ENCODE measurements at regions of chr11 and their contacts with region 1.

Region 1: DNA sequence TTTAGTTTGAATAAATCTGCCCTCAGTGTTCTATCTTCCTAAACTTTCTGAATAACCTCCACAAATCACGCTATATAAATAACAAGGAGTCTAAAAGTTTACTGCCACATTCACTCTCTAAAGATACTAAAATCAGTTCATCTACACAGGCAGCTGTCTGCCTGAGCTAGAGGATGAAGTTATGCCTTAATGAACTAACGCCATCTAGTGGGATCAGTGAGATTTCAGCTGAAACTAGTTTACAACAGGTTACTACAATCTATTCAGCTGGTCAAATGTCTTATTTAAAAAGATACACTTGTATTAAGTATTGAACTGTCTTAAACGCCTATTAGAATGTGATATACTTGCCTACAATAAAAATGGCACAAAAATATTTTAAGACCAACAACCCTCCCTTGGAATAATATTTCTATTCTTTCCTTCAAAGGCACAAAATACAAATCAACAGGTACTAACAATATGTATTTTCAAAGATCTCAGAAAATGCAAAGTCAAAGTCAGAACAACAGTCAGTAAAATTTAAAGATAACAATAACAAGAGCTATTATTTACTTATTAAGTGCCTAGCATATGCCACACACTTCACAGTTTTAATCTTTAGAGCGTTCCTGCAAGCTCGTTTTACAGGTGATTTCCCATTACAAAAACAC is 84.1 kb downstream of the LARGE2 start:
- DNase-seq: peak in 1 of 2 donors; percentile 78
- ATAC-seq: peak; percentile 79 to 87 (median 83)
- H3K4me3 ChIP-seq: no peak overlapping the region
- H3K4me3 Mint-ChIP-seq: no peak overlapping the region
- H3K27ac ChIP-seq: no peak overlapping the region
- H3K27ac Mint-ChIP-seq: peak overlapping the region; percentile 6 to 67
- H3K4me1 ChIP-seq: no peaks in the 10 kb centered on the region
- H3K4me1 Mint-ChIP-seq: peaks cover 18 to 21% of the 10 kb centered on the region in 2 donors
- H3K27me3 ChIP-seq: no peaks in the 10 kb centered on the region
- H3K27me3 Mint-ChIP-seq: no peaks in the 10 kb centered on the region
- CTCF ChIP-seq: peak; percentile 71

Region 2: GRCh38 chr11:45872513-45873356 is 133.8 kb before region 1 on chr11:
- intact Hi-C with region 1: loop called (anchors 10 kb)
- DNase-seq: peak in 1 of 2 donors; percentile 57
- ATAC-seq: peak; percentile 66 to 78 (median 71)
- H3K4me3 ChIP-seq: no peak overlapping the region
- H3K4me3 Mint-ChIP-seq: peak overlapping the region; percentile 9
- H3K27ac ChIP-seq: no peak overlapping the region
- H3K27ac Mint-ChIP-seq: no peak overlapping the region
- H3K4me1 ChIP-seq: no peaks in the 10 kb centered on the region
- H3K4me1 Mint-ChIP-seq: peaks cover 0 to 11% of the 10 kb centered on the region in 2 donors
- H3K27me3 ChIP-seq: no peaks in the 10 kb centered on the region
- H3K27me3 Mint-ChIP-seq: no peaks in the 10 kb centered on the region
- CTCF ChIP-seq: peak; percentile 52

Measured in natural killer cell (primary cell).